CD8-positive, alpha-beta T cell (primary cell): ENCODE measurements at regions of chr19 and their contacts with region 1.

Region 1: DNA sequence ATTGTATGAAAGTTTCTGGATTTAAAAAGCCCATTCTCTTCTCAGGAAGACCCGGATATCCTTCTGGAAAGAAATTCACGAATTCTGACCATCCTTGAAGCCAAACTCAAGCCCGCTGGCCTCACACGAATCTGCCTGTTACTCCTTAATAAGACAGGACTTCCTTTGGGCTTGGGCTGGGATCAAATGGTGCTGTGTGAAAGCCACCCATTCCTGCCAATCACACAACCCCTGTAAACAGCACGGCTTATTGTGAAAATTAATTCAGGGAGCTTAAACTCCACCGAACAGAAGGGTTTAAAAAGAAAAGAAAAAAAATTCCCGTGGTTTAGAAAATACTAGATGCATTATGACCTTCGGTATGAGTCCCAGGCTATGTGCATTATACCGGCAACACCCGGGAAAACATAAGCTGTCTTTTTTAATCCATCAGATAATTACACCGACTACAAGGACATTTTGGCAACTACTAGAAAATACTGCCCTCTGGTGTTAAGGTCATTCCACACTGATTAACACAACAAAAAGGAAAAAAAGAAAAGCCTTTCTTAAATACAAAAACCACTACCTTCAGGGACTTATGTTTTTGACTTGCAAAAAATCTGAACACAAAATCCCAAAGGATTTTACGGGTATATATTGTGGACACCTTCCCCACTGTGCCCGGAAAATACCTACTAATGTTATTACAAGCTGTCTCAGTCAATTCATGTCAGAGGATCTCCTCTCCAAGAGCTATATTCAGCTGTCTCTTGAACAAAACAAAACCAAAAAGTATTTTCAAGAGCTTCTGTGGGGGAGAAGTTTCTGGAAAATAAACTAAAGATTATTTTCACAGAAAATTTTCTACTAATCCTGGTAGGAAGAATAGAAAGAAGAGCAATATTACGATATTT is 76.0 kb upstream of the LSM14A start:
- DNase-seq: peak in 2 of 9 experiments; percentile 38 to 45
- ATAC-seq: no peak
- H3K4me3 ChIP-seq: no peak overlapping the region
- H3K4me3 Mint-ChIP-seq: no peak overlapping the region
- H3K27ac ChIP-seq: no peak overlapping the region
- H3K27ac Mint-ChIP-seq: no peak overlapping the region
- H3K4me1 ChIP-seq: no peaks in the 10 kb centered on the region
- H3K4me1 Mint-ChIP-seq: no peaks in the 10 kb centered on the region
- H3K27me3 ChIP-seq: no peaks in the 10 kb centered on the region
- H3K27me3 Mint-ChIP-seq: peaks cover 18% of the 10 kb centered on the region
- CTCF ChIP-seq: peak; percentile 66

Region 2: DNA sequence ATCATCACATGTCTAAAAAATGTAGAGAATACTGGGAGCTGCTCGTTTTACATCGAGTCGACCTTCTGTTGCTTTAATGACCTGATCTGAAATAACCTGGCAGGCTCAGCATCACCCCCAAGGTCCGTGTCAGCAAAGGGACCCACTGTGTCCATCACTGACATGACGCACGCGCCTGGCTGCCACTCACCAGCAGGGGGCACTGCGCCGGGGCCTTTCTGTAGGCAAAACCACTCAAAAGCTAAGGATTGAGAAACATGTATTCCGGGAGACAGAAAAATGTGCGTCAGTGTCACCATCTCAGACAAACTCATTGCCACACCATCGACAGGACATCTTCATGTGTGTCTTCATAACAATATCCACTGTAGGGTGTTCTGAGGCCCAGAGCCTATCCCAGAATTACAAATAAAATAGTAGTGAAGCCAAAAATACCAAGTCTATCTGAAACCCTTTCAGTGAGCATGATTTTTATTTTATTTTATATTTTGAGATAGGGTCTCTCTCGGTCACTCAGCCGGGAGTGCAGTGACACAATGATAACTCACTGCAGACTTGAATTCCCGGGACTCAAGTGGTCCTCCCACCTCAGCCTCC is 54.2 kb before region 1 on chr19:
- CTCF ChIA-PET with region 1: interaction called, 5 read pairs
- POLR2A ChIA-PET with region 1: no interaction called
- intact Hi-C with region 1: loop called in 1 of 2 experiments (anchors 2 kb)
- DNase-seq: peak; percentile 36 to 79 (median 63)
- ATAC-seq: no peak
- H3K4me3 ChIP-seq: no peak overlapping the region
- H3K4me3 Mint-ChIP-seq: no peak overlapping the region
- H3K27ac ChIP-seq: no peak overlapping the region
- H3K27ac Mint-ChIP-seq: no peak overlapping the region
- H3K4me1 ChIP-seq: no peaks in the 10 kb centered on the region
- H3K4me1 Mint-ChIP-seq: no peaks in the 10 kb centered on the region
- H3K27me3 ChIP-seq: peaks cover 0 to 2% of the 10 kb centered on the region in 2 experiments
- H3K27me3 Mint-ChIP-seq: peaks cover 30% of the 10 kb centered on the region
- CTCF ChIP-seq: peak; percentile 74

Region 3: DNA sequence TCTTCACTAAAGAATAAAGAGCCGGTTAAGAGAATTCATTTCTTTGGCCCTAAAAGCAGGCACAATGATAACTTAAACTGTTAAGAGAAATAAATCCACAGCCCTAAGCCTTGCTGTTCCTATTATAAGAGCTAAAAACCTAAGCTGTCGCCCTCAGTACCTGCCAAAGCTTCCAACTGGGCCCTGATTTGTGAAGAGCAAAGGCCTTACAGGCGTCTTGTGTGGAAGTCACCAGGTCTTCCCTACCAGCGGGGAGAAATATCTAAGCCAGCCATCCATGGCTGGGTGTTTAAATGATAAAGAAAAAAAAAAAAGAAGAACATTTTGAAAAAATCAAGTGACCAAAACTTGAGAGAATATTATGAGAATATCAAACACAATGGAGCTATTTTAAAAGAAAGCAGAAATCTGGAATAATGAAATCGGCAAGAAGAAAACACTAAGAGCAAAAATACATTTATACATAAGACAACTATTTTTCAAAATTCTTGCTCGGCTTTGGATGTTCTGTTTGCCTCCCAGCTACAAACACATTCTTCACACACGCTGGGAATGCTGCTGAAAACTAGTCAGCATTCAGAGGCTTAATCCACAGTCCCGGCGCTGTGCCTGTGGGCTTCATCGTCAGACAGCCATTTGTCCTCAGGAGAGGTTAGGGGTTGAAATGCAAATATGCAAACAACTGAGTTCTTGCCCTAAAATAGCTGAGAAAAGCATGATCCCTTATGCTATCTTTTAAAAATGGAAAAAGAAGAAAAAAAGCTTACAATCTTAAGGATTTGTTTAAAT is 13.8 kb before region 1 on chr19:
- CTCF ChIA-PET with region 1: interaction called, 10 read pairs
- POLR2A ChIA-PET with region 1: no interaction called
- intact Hi-C with region 1: no loop called
- DNase-seq: no peak
- ATAC-seq: no peak
- H3K4me3 ChIP-seq: no peak overlapping the region
- H3K4me3 Mint-ChIP-seq: no peak overlapping the region
- H3K27ac ChIP-seq: no peak overlapping the region
- H3K27ac Mint-ChIP-seq: no peak overlapping the region
- H3K4me1 ChIP-seq: no peaks in the 10 kb centered on the region
- H3K4me1 Mint-ChIP-seq: no peaks in the 10 kb centered on the region
- H3K27me3 ChIP-seq: no peaks in the 10 kb centered on the region
- H3K27me3 Mint-ChIP-seq: peaks cover 33% of the 10 kb centered on the region
- CTCF ChIP-seq: no peak

Region 4: GRCh38 chr19:34128558-34129250 is 32.4 kb after region 1 on chr19:
- CTCF ChIA-PET with region 1: no interaction called
- POLR2A ChIA-PET with region 1: no interaction called
- intact Hi-C with region 1: no loop called
- DNase-seq: no peak
- ATAC-seq: no peak
- H3K4me3 ChIP-seq: no peak overlapping the region
- H3K4me3 Mint-ChIP-seq: no peak overlapping the region
- H3K27ac ChIP-seq: no peak overlapping the region
- H3K27ac Mint-ChIP-seq: no peak overlapping the region
- H3K4me1 ChIP-seq: no peaks in the 10 kb centered on the region
- H3K4me1 Mint-ChIP-seq: no peaks in the 10 kb centered on the region
- H3K27me3 ChIP-seq: no peaks in the 10 kb centered on the region
- H3K27me3 Mint-ChIP-seq: no peaks in the 10 kb centered on the region
- CTCF ChIP-seq: no peak